GM10248 (cell line): ENCODE measurements at regions of chr5 and their contacts with region 1.

Region 1: DNA sequence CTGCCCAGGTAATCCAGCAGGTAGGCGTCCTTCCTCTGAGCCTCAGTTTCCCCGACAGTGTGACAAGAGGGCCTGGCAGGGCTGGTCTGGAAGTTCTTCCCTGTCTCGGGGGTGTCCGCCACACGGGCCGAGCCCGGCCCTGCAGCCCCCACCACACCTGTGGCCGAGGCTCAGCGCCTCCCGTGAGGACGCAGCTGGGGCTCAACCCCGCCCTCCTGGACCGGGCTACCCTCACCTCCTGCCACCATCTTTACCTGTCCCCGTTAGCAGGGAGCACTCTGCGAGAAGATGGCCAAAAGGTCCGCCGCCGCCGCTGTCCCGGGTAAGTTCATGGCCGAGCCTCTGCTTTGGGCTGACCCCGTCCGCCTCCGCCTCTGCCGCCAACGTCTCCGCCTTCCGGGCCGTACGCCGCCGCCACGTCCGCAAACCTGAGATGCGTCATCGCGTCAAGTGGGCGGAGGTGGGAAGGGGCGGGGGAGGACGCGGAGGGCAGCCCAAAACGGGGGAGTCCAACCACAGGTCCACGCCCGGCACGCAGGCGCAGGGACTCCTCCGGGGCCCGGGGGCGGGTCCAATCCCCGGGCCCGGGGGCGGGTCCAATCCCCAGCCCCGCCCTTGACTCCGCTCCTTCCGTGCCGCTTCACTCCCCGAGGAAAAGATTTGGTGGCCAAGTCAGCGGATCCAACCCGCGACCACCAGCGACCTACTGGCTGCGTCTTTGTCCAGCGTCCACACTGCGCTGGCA is at the start of gene LYSMD3:
- DNase-seq: peak; percentile 98
- CTCF ChIP-seq: no peak

Region 2: GRCh38 chr5:90184764-90185163 is 344.6 kb before region 1 on chr5:
- CTCF ChIA-PET with region 1: no interaction called
- POLR2A ChIA-PET with region 1: no interaction called
- DNase-seq: no peak
- CTCF ChIP-seq: no peak

Region 3: GRCh38 chr5:90434116-90434714 is 95.2 kb before region 1 on chr5:
- CTCF ChIA-PET with region 1: interaction called, 21 read pairs
- POLR2A ChIA-PET with region 1: no interaction called
- DNase-seq: no peak
- CTCF ChIP-seq: peak; percentile 78

Region 4: GRCh38 chr5:90440644-90441043 is 88.7 kb before region 1 on chr5:
- CTCF ChIA-PET with region 1: interaction called, 21 read pairs
- POLR2A ChIA-PET with region 1: no interaction called
- DNase-seq: no peak
- CTCF ChIP-seq: no peak